Heart right ventricle (tissue), 16 donors: ENCODE measurements at regions of chr2 and their contacts with region 1.

Region 1: DNA sequence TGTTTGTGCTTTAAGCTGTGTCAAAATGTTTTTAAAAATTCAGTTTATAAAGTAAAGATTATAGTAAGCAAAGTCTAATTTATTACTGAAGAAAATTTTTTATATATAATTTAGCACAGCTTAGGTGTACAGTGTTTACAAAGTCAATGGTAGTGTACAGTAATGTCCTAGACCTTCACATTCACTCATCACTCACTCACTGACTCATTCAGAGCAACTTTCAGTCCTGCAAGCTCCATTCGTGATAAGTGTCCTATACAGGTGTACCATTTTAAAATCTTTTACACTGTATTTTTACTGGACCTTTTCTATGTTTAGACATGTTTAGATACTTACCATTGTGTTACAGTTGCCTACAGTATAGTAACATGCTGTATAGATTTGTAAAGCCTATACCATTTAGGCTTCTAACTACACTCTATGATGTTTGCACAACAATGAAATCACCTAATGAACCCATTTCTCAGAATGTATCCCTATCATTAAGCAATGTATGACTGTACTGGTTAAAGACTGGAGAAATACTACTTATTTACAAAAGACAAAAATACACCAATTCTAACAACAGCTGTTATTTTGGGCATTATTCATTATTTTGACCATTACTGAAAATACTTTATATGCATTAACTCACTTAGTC is 95.1 kb downstream of the STRN start:
- DNase-seq: no peak
- ATAC-seq: no peak
- H3K4me3 ChIP-seq: no peak overlapping the region
- H3K27ac ChIP-seq: no peak overlapping the region
- H3K4me1 ChIP-seq: no peaks in the 10 kb centered on the region
- H3K27me3 ChIP-seq: no peaks in the 10 kb centered on the region
- CTCF ChIP-seq: no peak

Region 2: DNA sequence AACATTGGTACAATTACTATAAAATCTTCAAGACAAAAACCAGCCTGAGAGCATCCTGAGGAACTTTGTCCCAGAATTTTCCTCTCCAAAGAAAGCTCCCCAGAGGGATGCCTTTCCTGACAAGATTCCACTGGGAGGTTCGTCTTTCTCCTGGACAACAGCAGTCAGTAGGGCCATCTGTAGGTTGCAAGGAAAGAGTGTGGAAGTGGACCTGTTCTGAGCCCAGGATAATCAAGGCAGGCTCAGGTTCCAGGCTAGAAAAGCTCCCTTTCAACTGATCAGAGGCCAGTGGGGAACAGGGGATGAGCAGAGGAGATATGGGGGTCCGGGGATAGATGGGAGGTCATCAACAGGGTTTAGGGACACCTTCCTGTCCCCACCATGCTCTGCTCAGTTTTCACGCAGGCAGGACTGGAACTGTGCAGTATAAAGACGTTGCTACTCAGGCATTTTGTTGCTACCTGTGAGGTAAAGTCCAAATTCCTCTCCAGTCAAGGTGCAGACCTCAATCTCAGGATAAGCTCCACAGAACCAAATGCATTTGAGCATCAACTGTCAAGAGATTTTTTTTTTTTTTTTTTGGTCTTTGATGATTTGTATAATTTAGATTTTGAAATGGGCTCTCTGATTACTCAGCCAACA is 31.1 kb before region 1 on chr2:
- intact Hi-C with region 1: loop called in 1 of 10 experiments (anchors 1 kb)
- DNase-seq: no peak
- ATAC-seq: peak in 1 of 8 donors; percentile 30
- H3K4me3 ChIP-seq: no peak overlapping the region
- H3K27ac ChIP-seq: no peak overlapping the region
- H3K4me1 ChIP-seq: no peaks in the 10 kb centered on the region
- H3K27me3 ChIP-seq: no peaks in the 10 kb centered on the region
- CTCF ChIP-seq: no peak